GM12878 (cell line): ENCODE measurements at regions of chr16 and their contacts with region 1.

Region 1: DNA sequence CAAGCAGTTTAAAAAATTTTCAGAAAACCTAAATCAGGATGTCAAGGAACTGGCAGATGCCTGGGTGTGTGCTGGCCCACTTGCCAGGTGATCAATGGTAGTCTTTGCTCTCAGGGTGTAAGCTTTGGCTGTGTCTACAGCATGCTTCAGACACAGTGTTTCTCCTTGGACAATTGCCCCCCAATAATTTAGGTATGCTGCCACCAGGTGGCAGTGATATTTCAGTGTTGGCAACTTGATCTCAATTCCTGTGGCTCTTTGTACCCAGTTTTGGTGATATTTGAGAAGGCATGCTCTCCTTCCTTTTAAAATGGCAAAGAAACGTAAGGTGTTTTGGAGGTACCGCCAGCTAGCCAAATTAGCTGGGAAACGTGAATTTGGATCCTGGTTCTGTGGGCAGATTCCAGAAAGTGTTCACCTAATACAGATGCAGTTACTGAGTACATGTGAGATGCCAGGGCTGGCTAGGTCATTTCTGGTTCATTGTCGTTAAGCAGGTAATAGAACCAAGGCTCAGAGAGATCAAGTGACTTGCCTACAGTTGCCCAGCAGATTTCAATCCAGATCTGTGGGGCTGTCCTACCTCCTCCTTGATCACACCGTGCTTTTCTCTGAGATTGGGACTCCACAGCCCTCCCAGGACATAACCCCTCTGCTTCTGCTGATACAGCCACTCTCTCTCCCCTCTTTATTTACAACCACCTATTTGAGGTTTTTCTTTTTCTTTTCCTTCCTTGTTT is 155.6 kb upstream of the PLCG2 start:
- DNase-seq: peak; percentile 37
- ATAC-seq: peak; percentile 76
- H3K4me3 ChIP-seq: no peak overlapping the region
- H3K27ac ChIP-seq: no peak overlapping the region
- H3K4me1 ChIP-seq: peaks cover 10% of the 10 kb centered on the region
- H3K27me3 ChIP-seq: no peaks in the 10 kb centered on the region
- CTCF ChIP-seq: peak; percentile 62 to 84 (median 68); a peak in 5 of 6 replicates
- EP300 ChIP-seq: no peak
- POLR2A ChIP-seq: no peak
- RAD21 ChIP-seq: peak; percentile 87

Region 2: GRCh38 chr16:81366316-81366932 is 257.1 kb before region 1 on chr16:
- CTCF ChIA-PET with region 1: interaction called, 9 read pairs
- POLR2A ChIA-PET with region 1: no interaction called
- RAD21 ChIA-PET with region 1: interaction called, 3 read pairs
- SMC1A ChIA-PET with region 1: interaction called, 10 read pairs
- in situ Hi-C with region 1: no loop called
- intact Hi-C with region 1: loop called (anchors 1 kb)
- DNase-seq: peak; percentile 23
- ATAC-seq: peak; percentile 82
- H3K4me3 ChIP-seq: no peak overlapping the region
- H3K27ac ChIP-seq: no peak overlapping the region
- H3K4me1 ChIP-seq: peaks cover 4% of the 10 kb centered on the region; the same call in 1 of the 2 replicates
- H3K27me3 ChIP-seq: no peaks in the 10 kb centered on the region
- CTCF ChIP-seq: peak; percentile 55 to 76 (median 70); a peak in 5 of 6 replicates
- EP300 ChIP-seq: no peak
- POLR2A ChIP-seq: no peak
- RAD21 ChIP-seq: peak; percentile 85

Region 3: DNA sequence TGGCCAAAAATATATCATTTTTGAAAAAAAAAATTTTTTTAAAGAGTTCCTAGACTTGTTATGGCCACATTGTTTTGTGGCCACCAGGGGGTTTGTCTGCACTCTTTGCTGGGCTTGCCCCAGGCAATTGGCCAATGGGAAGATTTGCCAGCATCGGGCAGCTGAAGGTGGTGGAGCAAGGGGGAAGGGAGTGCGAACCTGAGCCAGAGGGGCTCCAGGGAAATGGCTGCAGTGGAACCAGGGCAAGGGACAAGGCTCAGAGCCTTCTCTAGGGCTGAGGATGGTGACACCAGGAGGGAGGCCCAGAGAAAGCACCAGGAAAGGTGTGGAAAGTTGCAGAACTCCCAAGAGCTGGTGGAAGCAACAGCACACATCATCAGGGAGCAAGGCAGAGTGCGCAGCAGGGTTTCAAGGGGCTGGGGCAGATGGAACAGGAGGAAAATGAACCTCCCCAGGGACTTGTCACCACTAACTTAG is 194.4 kb before region 1 on chr16:
- CTCF ChIA-PET with region 1: interaction called, 3 read pairs
- POLR2A ChIA-PET with region 1: no interaction called
- RAD21 ChIA-PET with region 1: interaction called, 4 read pairs
- SMC1A ChIA-PET with region 1: interaction called, 11 read pairs
- in situ Hi-C with region 1: no loop called
- intact Hi-C with region 1: no loop called
- DNase-seq: no peak
- ATAC-seq: peak; percentile 59
- H3K4me3 ChIP-seq: no peak overlapping the region
- H3K27ac ChIP-seq: no peak overlapping the region
- H3K4me1 ChIP-seq: peaks cover 27% of the 10 kb centered on the region
- H3K27me3 ChIP-seq: no peaks in the 10 kb centered on the region
- CTCF ChIP-seq: peak; percentile 35 to 47 (median 43); a peak in 5 of 6 replicates
- EP300 ChIP-seq: no peak
- POLR2A ChIP-seq: no peak
- RAD21 ChIP-seq: peak; percentile 61

Region 4: DNA sequence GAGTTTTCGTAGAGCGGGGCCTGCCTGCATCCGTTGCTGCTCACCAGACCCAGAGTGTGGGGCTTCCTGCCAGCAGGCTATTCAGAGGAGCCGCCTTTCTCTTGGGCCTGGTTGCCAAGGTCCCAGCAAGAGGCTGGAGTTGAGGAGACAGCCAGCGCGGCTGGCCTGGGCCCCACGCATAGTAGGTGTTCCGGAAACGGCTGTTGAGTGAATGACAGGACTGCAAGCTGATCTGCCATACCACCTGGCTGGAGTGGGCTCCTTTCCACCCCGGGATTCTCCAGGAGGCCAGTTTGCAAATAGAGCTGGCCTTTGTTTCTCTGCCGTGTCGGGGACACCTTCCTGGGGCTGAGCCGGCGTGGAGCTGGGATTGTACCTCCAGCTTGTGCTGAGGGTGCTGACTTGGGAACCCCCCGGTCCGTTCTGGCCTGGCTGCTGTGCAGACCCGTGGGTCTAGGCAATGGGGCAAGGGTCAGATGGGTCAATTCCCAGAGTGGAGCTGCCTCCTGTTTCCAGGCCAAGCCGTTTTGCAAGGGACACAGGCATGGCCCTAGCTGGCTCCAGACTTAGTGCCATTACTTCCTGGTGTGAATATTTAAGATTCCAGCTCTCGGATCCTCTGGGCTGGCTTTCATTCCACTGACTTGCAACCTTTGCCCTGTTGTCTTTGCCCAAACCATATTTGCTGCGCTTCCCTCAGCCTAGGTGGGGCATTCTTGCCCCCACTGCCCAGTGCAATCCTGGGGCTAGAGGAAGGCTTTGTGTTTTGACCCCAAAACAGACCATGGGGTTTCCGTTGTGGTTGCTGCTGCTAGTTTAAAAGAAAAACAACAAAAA is 110.1 kb before region 1 on chr16:
- CTCF ChIA-PET with region 1: no interaction called
- POLR2A ChIA-PET with region 1: no interaction called
- RAD21 ChIA-PET with region 1: no interaction called
- SMC1A ChIA-PET with region 1: no interaction called
- in situ Hi-C with region 1: no loop called
- intact Hi-C with region 1: no loop called
- DNase-seq: no peak
- ATAC-seq: peak; percentile 63
- H3K4me3 ChIP-seq: peak overlapping the region; percentile 29; the same call in 1 of the 2 replicates
- H3K27ac ChIP-seq: peak overlapping the region; percentile 35
- H3K4me1 ChIP-seq: peaks cover 20% of the 10 kb centered on the region
- H3K27me3 ChIP-seq: no peaks in the 10 kb centered on the region
- CTCF ChIP-seq: no peak
- EP300 ChIP-seq: no peak
- POLR2A ChIP-seq: no peak
- RAD21 ChIP-seq: no peak

Region 5: DNA sequence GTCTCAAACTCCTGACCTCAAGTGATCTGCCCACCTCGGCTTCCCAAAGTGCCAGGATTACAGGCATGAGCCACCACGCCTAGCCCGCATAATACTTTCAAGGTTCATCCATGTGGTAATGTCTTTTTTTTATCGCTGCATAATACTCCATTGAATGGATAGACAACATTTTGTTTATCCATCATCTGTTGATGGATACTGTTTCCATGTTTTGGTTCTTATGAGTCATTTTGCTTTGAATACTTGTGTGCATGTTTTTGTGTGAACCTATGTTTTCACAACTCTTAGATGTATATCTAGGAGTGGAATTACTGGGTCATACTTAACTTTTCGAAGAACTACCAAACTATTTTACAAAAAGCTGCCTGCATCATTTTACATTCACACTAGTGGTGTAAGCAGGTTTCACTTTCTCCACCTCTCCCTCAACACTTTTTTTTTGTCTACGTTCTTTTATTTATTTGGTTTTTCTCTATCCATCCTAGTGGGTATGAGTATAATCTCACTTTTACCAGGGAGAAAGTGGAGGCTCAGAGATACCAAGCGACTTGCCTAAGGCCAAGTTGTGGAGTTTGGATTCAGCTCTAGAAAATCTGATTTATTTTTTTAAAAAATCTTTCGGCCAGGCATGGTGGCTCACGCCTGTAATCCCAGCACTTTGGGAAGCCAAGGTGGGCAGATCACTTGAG is 27.8 kb before region 1 on chr16:
- CTCF ChIA-PET with region 1: no interaction called
- POLR2A ChIA-PET with region 1: no interaction called
- RAD21 ChIA-PET with region 1: no interaction called
- SMC1A ChIA-PET with region 1: no interaction called
- in situ Hi-C with region 1: no loop called
- intact Hi-C with region 1: no loop called
- DNase-seq: no peak
- ATAC-seq: no peak
- H3K4me3 ChIP-seq: no peak overlapping the region
- H3K27ac ChIP-seq: no peak overlapping the region
- H3K4me1 ChIP-seq: no peaks in the 10 kb centered on the region
- H3K27me3 ChIP-seq: no peaks in the 10 kb centered on the region
- CTCF ChIP-seq: no peak
- EP300 ChIP-seq: no peak
- POLR2A ChIP-seq: no peak
- RAD21 ChIP-seq: no peak

Region 6: GRCh38 chr16:81715358-81716196 is 92.0 kb after region 1 on chr16:
- CTCF ChIA-PET with region 1: interaction called, 6 read pairs
- POLR2A ChIA-PET with region 1: no interaction called
- RAD21 ChIA-PET with region 1: interaction called, 13 read pairs
- SMC1A ChIA-PET with region 1: interaction called, 11 read pairs
- in situ Hi-C with region 1: no loop called
- intact Hi-C with region 1: loop called (anchors 1 kb)
- DNase-seq: peak; percentile 77
- ATAC-seq: peak; percentile 72
- H3K4me3 ChIP-seq: peak overlapping the region; percentile 64
- H3K27ac ChIP-seq: peak overlapping the region; percentile 75
- H3K4me1 ChIP-seq: peaks cover 34% of the 10 kb centered on the region
- H3K27me3 ChIP-seq: no peaks in the 10 kb centered on the region
- CTCF ChIP-seq: no peak
- EP300 ChIP-seq: peak; percentile 69 to 86
- POLR2A ChIP-seq: no peak
- RAD21 ChIP-seq: no peak

Region 7: GRCh38 chr16:81730090-81731051 is 106.8 kb after region 1 on chr16:
- CTCF ChIA-PET with region 1: interaction called, 57 read pairs
- POLR2A ChIA-PET with region 1: no interaction called
- RAD21 ChIA-PET with region 1: interaction called, 27 read pairs
- SMC1A ChIA-PET with region 1: interaction called, 23 read pairs
- in situ Hi-C with region 1: loop called (anchors 5 kb)
- intact Hi-C with region 1: loop called (anchors 5 kb)
- DNase-seq: no peak
- ATAC-seq: peak; percentile 93
- H3K4me3 ChIP-seq: peak overlapping the region; percentile 52
- H3K27ac ChIP-seq: peak overlapping the region; percentile 60
- H3K4me1 ChIP-seq: peaks cover 12% of the 10 kb centered on the region
- H3K27me3 ChIP-seq: no peaks in the 10 kb centered on the region
- CTCF ChIP-seq: peak; percentile 49 to 78 (median 74)
- EP300 ChIP-seq: no peak
- POLR2A ChIP-seq: no peak
- RAD21 ChIP-seq: no peak